ENCODE measurements at regions of chr2 and their contacts with region 1.

Region 1: GRCh38 chr2:70086838-70087701 is at the start of gene PCBP1:
- DNase-seq: peak; percentile 97 to 99
- ATAC-seq: peak; percentile 96
- H3K4me3 ChIP-seq: peak within 1 kb of the TSS; percentile 75 to 96
- H3K27ac ChIP-seq: peak within 1 kb of the TSS; percentile 89 to 100
- H3K4me1 ChIP-seq: peaks cover 0 to 2% of the 10 kb centered on the region in 2 donors
- H3K27me3 ChIP-seq: no peaks in the 10 kb centered on the region
- total RNA-seq, gene PCBP1: 263 to 288 TPM

Region 2: DNA sequence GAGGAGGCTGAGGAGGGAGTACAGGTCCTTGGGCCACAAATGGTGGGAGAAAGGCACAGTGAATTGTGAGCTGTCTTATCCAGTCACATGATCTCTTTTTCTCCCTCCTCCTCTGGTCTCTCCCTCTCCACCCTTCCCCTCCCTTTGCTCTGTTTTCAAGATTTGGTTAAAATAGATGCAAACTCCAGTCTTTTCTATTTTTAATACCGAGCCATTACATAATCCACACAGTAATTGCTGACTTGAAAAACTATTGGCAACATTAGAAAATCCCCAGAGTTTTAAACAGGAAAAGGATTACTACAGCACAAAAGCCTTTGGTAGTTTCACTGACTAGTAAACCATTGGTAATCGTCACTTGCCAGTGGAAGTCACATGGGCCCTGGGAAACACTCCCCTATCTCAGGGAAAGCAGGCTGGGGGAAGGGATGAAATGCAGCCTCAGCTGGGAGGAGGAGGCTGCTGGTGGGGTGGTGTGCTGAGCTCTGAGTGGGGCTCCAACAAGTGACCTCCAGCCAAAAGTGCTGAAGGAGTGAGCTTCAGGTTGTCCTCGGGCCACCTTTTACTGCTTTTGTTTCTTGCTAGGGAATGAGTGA is 57.2 kb before region 1 on chr2:
- intact Hi-C with region 1: loop called in 1 of 2 experiments (anchors 5 kb)
- DNase-seq: peak; percentile 79 to 90
- ATAC-seq: peak; percentile 92
- H3K4me3 ChIP-seq: no peak overlapping the region
- H3K27ac ChIP-seq: peak overlapping the region; percentile 73 to 80
- H3K4me1 ChIP-seq: peaks cover 3 to 4% of the 10 kb centered on the region in 2 donors
- H3K27me3 ChIP-seq: no peaks in the 10 kb centered on the region

Region 3: DNA sequence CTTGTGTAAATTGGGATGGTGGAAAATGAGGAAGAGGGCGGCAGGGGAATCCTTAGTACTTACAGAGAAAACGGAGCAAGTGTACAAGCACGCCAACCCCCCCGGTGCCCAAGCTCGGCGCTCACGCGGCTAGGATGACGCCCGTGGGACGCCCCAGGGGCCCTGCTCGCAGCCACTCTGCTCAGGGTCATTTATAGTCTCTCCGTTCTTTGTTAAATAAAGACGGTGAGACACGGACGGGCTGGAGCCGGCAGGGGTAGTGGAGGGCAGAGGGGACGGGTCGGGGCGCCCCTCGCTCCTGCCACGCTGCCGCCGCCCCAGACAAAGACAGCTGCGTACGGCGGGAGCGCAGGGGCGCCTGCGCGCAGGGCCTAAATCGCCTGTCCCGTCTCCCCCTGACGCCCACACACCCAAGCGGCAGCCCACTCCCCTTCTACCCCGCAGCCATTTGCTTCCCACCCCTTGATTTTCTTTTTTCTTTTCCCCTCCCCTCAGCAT is 38.0 kb after region 1 on chr2:
- intact Hi-C with region 1: loop called (anchors 1 to 2 kb)
- DNase-seq: peak; percentile 84 to 89
- ATAC-seq: peak; percentile 82
- H3K4me3 ChIP-seq: peak overlapping the region; percentile 12 to 52
- H3K27ac ChIP-seq: peak overlapping the region; percentile 76 to 100
- H3K4me1 ChIP-seq: no peaks in the 10 kb centered on the region
- H3K27me3 ChIP-seq: no peaks in the 10 kb centered on the region

Region 4: DNA sequence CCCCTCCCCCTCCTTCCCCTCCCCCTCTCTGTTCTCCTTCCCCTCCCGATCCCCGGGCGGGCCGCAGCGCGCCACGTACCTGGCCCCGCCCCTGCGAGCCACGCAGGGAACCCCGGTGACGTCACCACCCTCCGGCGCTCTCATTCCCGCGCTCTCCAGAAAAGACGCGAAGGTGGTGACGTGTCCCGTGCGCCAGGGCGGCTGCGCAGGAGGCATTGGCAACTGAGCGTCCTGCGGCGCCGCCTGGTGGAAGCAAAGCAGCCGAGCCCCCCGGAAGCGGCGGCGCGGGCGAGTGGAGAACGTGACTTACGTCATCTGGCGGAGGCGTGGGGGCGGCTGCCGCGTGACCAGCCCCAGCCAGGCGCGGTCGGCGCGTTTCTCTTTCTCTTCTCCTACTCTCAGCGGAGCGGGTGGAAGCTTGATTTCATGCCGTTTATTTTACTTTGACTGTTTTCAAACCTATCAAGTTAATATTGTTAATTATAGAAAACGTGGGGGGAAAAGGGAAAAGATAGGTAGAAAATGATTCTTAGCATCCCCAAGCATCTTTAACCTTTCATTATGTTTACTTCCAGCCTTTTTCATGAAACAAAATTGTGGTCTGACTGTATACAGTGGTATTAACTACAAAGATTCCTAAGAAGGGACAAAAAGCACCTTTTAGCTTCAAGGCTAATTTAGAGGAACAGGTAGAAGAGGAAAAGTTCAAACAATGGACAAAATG is 55.7 kb after region 1 on chr2:
- intact Hi-C with region 1: loop called (anchors 1 to 5 kb)
- DNase-seq: peak; percentile 100
- ATAC-seq: peak; percentile 95
- H3K4me3 ChIP-seq: peak overlapping the region; percentile 42 to 63
- H3K27ac ChIP-seq: peak overlapping the region; percentile 78 to 92
- H3K4me1 ChIP-seq: no peaks in the 10 kb centered on the region
- H3K27me3 ChIP-seq: no peaks in the 10 kb centered on the region

Measured in aorta (tissue), 5 donors.